Activated B cell treated with CpG ODN at 0.5 μM for 24 hours (primary cell): ENCODE measurements at regions of chr13 and their contacts with region 1.

Region 1: GRCh38 chr13:31909864-31910551 is 121.6 kb upstream of the FRY start:
- DNase-seq: no peak
- ATAC-seq: peak; percentile 45
- H3K4me3 Mint-ChIP-seq: no peak overlapping the region
- H3K27ac Mint-ChIP-seq: no peak overlapping the region
- H3K4me1 Mint-ChIP-seq: peaks cover 14% of the 10 kb centered on the region
- H3K27me3 Mint-ChIP-seq: peaks cover 4% of the 10 kb centered on the region
- CTCF ChIP-seq: peak; percentile 96

Region 2: GRCh38 chr13:31919971-31920726 is 10.1 kb after region 1 on chr13:
- CTCF ChIA-PET with region 1: interaction called, 13 read pairs
- POLR2A ChIA-PET with region 1: no interaction called
- intact Hi-C with region 1: no loop called
- DNase-seq: no peak
- ATAC-seq: no peak
- H3K4me3 Mint-ChIP-seq: no peak overlapping the region
- H3K27ac Mint-ChIP-seq: no peak overlapping the region
- H3K4me1 Mint-ChIP-seq: peaks cover 9% of the 10 kb centered on the region
- H3K27me3 Mint-ChIP-seq: no peaks in the 10 kb centered on the region
- CTCF ChIP-seq: no peak

Region 3: DNA sequence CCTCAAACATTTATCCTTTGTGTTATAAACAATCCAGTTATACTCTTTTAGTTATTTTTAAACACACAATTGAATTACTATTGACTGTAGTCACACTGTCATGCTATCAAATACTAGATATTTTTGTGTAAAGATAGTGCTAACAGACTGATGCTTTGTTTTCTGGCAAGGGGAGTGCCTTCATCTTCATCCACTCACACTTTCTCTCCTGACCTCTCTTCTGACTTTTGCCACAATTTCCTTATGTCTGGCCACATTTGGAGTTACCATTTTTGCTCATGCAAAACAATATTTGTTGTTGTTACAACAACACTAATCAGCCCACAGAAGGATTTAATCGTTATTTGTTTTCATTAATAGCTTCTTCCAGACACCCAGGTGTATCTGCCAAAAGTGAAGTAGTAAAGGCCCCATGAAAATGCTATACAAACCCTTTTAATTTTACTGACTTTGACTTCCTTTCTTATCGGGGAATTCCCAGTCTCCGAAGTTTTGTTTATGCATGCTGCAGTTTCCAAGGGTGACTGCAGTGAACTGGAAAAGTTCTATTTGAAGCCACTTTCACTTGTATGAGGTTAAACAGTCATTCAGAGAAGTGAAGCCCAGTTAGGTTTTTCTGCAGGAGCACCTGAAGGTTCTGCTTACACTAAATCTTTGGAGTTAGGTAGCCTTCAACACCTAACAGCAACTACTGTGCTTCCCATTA is 55.5 kb after region 1 on chr13:
- CTCF ChIA-PET with region 1: interaction called, 6 read pairs
- POLR2A ChIA-PET with region 1: no interaction called
- intact Hi-C with region 1: loop called (anchors 1 kb)
- DNase-seq: no peak
- ATAC-seq: peak; percentile 89
- H3K4me3 Mint-ChIP-seq: peak overlapping the region; percentile 30
- H3K27ac Mint-ChIP-seq: peak overlapping the region; percentile 91
- H3K4me1 Mint-ChIP-seq: peaks cover 46% of the 10 kb centered on the region
- H3K27me3 Mint-ChIP-seq: no peaks in the 10 kb centered on the region
- CTCF ChIP-seq: no peak

Region 4: GRCh38 chr13:32164622-32165268 is 254.7 kb after region 1 on chr13:
- CTCF ChIA-PET with region 1: interaction called, 8 read pairs
- POLR2A ChIA-PET with region 1: no interaction called
- intact Hi-C with region 1: loop called (anchors 1 kb)
- DNase-seq: no peak
- ATAC-seq: peak; percentile 52
- H3K4me3 Mint-ChIP-seq: no peak overlapping the region
- H3K27ac Mint-ChIP-seq: no peak overlapping the region
- H3K4me1 Mint-ChIP-seq: peaks cover 6% of the 10 kb centered on the region
- H3K27me3 Mint-ChIP-seq: no peaks in the 10 kb centered on the region
- CTCF ChIP-seq: no peak

Region 5: GRCh38 chr13:32427852-32428580 is 518.0 kb after region 1 on chr13 and contains the start of gene N4BP2L1:
- CTCF ChIA-PET with region 1: no interaction called
- POLR2A ChIA-PET with region 1: no interaction called
- intact Hi-C with region 1: loop called (anchors 5 kb)
- DNase-seq: peak; percentile 77
- ATAC-seq: peak; percentile 73
- H3K4me3 Mint-ChIP-seq: peak within 1 kb of the TSS; percentile 95
- H3K27ac Mint-ChIP-seq: peak within 1 kb of the TSS; percentile 99
- H3K4me1 Mint-ChIP-seq: peaks cover 48% of the 10 kb centered on the region
- H3K27me3 Mint-ChIP-seq: no peaks in the 10 kb centered on the region
- CTCF ChIP-seq: no peak
- total RNA-seq, gene N4BP2L1: 23.0 and 24.3 TPM in 2 replicates

Region 6: GRCh38 chr13:32650705-32651311 is 740.8 kb after region 1 on chr13:
- CTCF ChIA-PET with region 1: no interaction called
- POLR2A ChIA-PET with region 1: no interaction called
- intact Hi-C with region 1: loop called (anchors 5 kb)
- DNase-seq: no peak
- ATAC-seq: peak; percentile 85
- H3K4me3 Mint-ChIP-seq: no peak overlapping the region
- H3K27ac Mint-ChIP-seq: no peak overlapping the region
- H3K4me1 Mint-ChIP-seq: peaks cover 54% of the 10 kb centered on the region
- H3K27me3 Mint-ChIP-seq: no peaks in the 10 kb centered on the region
- CTCF ChIP-seq: peak; percentile 78